ENCODE measurements at regions of chr17 and their contacts with region 1.

Region 1: GRCh38 chr17:35726127-35726952 is 5.1 kb upstream of the RASL10B start:
- DNase-seq: peak; percentile 66 to 83 (median 82)
- ATAC-seq: peak in 1 of 2 donors; percentile 27
- H3K4me3 ChIP-seq: no peak overlapping the region
- H3K27ac ChIP-seq: peak overlapping the region; percentile 6
- H3K4me1 ChIP-seq: peaks cover 7% of the 10 kb centered on the region
- H3K27me3 ChIP-seq: no peaks in the 10 kb centered on the region

Region 2: DNA sequence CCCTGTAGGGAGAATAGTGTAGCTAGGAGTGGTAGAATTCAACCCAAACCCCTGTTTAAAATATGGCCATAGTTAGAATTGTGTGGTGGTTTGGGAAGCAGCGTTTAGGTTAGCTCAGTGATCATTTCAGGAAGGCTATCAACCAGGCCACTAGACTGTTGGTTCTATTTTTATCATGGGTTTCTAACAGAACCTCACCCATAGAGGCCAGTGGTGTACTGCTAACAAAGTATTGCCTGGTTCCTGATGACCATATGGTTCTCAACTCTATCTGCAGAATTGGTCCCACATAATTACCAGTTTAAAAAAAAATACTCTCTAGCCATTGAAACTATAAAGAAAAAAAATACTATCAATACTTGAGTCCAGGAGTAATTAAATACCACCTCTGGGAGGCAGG is 65.4 kb before region 1 on chr17:
- intact Hi-C with region 1: no loop called
- DNase-seq: no peak
- ATAC-seq: peak; percentile 57 to 75
- H3K4me3 ChIP-seq: no peak overlapping the region
- H3K27ac ChIP-seq: no peak overlapping the region
- H3K4me1 ChIP-seq: no peaks in the 10 kb centered on the region
- H3K27me3 ChIP-seq: no peaks in the 10 kb centered on the region

Region 3: DNA sequence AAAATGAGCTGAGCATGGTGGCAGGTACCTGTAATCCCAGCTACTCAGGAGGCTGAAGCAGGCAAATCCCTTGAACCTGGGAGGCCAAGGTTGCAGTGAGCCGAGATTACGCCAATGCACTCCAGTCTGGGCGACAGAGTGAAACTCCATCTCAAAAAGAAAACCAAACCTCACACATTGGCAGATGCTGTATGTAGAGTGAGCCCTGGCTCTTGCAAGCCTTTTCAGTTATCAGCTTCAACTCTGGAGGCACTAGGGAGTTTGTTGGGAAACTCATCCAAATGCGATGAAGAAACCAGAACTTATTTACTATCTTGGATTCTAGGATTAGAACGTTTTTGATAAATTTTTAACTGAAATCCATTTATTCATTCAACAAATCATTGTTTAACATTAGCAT is 51.8 kb before region 1 on chr17:
- intact Hi-C with region 1: loop called in 1 of 4 experiments (anchors 5 kb)
- DNase-seq: peak in 1 of 3 donors; percentile 44
- ATAC-seq: peak in 1 of 2 donors; percentile 79
- H3K4me3 ChIP-seq: no peak overlapping the region
- H3K27ac ChIP-seq: no peak overlapping the region
- H3K4me1 ChIP-seq: peaks cover 4% of the 10 kb centered on the region
- H3K27me3 ChIP-seq: no peaks in the 10 kb centered on the region

Region 4: DNA sequence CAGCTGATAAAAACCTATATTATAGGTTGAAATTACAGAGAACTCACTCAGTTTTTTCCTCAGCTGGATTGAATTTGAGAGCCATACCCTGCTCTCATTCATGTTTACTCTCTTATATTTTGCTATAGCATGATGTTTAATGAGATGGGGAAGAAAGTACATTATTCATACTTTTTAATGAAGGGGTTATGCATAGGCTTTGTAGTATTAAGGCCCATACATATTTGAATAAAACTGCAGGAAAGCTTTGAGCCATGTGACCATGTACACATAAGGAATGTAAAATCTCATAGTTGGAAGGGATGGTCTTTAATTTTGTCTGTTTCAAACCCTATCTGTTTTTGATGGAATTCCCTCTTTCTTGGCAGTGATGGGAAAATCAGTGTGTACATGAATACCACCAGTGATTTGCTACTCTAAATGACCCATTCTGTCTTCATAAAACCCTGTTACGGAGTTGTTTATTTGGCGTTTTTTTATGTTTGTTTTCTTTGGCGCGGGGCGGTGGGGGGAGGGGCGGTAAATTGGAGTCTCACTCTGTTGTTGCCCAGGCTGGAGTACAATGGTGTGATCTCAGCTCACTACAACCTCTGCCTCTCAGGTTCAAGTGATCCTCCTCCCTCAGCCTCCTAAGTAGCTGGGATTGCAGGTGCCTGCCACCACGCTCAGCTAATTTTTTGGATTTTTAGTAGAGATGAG is 33.7 kb before region 1 on chr17:
- intact Hi-C with region 1: no loop called
- DNase-seq: no peak
- ATAC-seq: no peak
- H3K4me3 ChIP-seq: no peak overlapping the region
- H3K27ac ChIP-seq: no peak overlapping the region
- H3K4me1 ChIP-seq: no peaks in the 10 kb centered on the region
- H3K27me3 ChIP-seq: no peaks in the 10 kb centered on the region